Gastrocnemius medialis (tissue), 4 donors: ENCODE measurements at regions of chr15 and their contacts with region 1.

Region 1: GRCh38 chr15:42548253-42549031 is at the starts of genes HAUS2 and LRRC57:
- DNase-seq: peak; percentile 70 to 74
- ATAC-seq: peak; percentile 87 to 92
- H3K4me3 ChIP-seq: peak within 1 kb of the TSS; percentile 79 to 100 (median 88)
- H3K27ac ChIP-seq: peak within 1 kb of the TSS; percentile 84 to 95 (median 90)
- H3K4me1 ChIP-seq: peaks cover 27 to 30% of the 10 kb centered on the region in 2 donors
- H3K27me3 ChIP-seq: no peaks in the 10 kb centered on the region
- CTCF ChIP-seq: peak in 1 of 5 experiments; percentile 27
- POLR2A ChIP-seq: peak; percentile 80 to 82
- total RNA-seq, gene HAUS2: 24.7 to 31.9 (median 27.8) TPM
- total RNA-seq, gene LRRC57: 6.0 to 15.4 (median 10.0) TPM

Region 2: DNA sequence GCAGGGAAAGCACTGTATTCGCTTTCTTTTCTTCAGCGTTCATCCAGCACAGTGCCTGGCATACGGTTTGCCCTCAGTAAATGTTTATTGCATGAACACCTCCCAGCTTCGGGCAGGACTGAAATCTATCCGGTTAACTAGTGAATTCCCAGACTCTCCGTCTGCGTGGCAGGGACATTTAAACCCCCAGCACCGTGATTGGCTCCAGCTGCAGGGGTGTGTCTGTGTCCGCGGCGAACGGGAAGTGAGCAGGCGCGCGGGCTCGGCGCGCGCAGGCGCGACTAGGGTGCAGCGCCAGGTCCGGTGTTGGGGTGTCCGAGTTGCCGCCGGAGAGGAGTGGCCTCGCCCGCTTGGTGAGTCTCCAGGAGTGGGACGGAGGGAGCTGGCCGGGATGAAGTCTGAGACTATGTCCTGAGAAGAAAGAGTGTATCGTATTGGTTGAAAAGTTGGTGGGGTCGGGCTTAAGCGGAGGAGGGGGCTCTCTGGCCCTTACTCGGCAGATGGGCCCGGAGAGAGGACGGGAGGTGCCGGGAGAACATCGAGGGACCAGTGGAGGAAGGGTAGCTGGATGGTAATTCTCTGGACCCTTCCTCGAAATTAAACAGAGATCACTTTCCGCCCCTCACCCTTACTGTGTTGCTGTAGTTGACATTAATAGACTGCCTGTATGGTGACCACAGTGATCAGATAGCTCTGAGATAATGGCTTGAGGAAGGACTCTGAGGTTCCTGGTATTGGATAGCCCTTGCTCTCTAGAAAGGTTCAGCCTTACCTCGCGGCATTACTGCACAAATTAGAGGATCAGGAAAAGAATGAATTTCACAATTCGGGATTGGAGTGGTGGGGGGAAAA is 52.9 kb before region 1 on chr15 and contains the start of gene SNAP23:
- in situ Hi-C with region 1: no loop called
- intact Hi-C with region 1: loop called (anchors 5 kb)
- DNase-seq: peak; percentile 94 to 96
- ATAC-seq: peak; percentile 85 to 90
- H3K4me3 ChIP-seq: peak within 1 kb of the TSS; percentile 73 to 92 (median 84)
- H3K27ac ChIP-seq: peak within 1 kb of the TSS; percentile 88 to 97 (median 96)
- H3K4me1 ChIP-seq: peaks cover 41 to 52% of the 10 kb centered on the region in 2 donors
- H3K27me3 ChIP-seq: no peaks in the 10 kb centered on the region
- CTCF ChIP-seq: no peak
- POLR2A ChIP-seq: peak; percentile 95 to 99
- total RNA-seq, gene SNAP23: 26.7 to 74.3 (median 40.2) TPM

Region 3: DNA sequence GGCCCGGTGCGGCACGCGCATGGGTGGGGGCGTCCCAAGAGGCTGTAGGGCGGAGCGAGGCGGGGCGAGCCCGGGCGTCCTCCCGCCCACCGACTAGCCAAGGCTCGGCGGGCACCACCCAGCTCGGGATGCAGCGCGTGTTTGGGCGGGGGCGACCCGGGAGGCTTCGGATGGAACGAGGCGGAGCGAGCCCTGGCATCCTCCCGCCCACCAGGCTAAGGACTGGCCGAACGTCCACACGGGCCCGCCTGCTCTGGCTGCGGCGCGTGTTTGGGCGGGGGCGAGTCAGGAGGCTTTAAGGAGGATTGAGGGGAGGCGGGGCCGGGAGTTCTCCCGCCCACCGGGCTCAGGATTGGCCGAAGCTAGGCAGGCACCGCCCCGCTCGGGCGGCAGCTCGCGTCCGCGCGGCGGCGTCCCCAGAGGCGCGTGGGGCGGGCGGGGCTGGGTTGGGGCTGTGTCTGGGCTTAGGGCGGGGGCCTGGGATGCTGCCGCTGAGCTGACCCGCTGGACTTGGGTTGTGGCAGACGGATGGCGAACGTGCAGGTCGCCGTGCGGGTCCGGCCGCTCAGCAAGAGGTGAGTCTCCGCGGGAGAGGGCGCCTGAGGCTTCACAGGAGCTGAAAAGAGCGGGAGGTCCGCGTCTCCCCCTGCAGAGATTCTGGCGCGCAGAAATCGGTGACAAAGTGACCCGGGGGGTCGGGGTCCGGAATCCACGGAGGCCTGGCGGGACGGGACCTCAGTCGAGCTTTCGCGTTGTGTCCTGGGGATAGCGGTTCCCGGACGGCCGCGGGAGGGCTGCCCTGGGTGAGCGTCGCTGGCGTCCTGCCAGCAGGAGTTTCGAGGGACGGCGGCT is 27.0 kb after region 1 on chr15 and contains the start of gene STARD9:
- in situ Hi-C with region 1: no loop called
- intact Hi-C with region 1: loop called (anchors 1 kb)
- DNase-seq: peak; percentile 96 to 98
- ATAC-seq: peak; percentile 95 to 96
- H3K4me3 ChIP-seq: peak within 1 kb of the TSS; percentile 85 to 97 (median 91)
- H3K27ac ChIP-seq: peak within 1 kb of the TSS; percentile 85 to 93 (median 87)
- H3K4me1 ChIP-seq: peaks cover 14 to 15% of the 10 kb centered on the region in 2 donors
- H3K27me3 ChIP-seq: peaks cover 0 to 5% (median 0%) of the 10 kb centered on the region in 3 donors
- CTCF ChIP-seq: peak in 1 of 5 experiments; percentile 10
- POLR2A ChIP-seq: peak; percentile 56 to 87
- total RNA-seq, gene STARD9: 1.6 to 3.5 (median 2.0) TPM

Region 4: DNA sequence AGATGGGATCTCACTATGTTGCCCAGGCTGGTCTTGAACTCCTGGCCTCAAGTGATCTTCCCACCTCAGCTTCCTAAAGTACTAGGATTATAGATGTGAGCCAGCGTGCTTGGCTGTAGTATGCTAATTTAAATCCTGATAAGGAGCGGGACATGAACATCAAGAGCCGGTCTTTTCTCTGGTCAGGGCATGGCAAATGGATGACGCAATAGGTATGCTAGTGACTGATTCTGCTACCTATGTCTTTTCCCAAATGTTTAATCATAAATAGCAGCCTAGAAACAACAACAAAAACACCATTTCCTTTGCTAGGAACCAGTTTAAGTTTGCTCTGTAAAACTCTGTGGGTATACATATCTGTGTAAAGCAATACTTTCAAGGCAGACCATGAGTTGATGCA is 91.7 kb after region 1 on chr15:
- in situ Hi-C with region 1: loop called in 1 of 4 experiments (anchors 10 kb)
- intact Hi-C with region 1: no loop called
- DNase-seq: no peak
- ATAC-seq: no peak
- H3K4me3 ChIP-seq: no peak overlapping the region
- H3K27ac ChIP-seq: no peak overlapping the region
- H3K4me1 ChIP-seq: no peaks in the 10 kb centered on the region
- H3K27me3 ChIP-seq: no peaks in the 10 kb centered on the region
- CTCF ChIP-seq: no peak
- POLR2A ChIP-seq: no peak

Region 5: GRCh38 chr15:42736793-42737528 is 188.5 kb after region 1 on chr15 and contains the start of gene CDAN1:
- in situ Hi-C with region 1: no loop called
- intact Hi-C with region 1: no loop called
- DNase-seq: peak; percentile 83 to 89
- ATAC-seq: peak; percentile 94
- H3K4me3 ChIP-seq: peak within 1 kb of the TSS; percentile 61 to 90 (median 72)
- H3K27ac ChIP-seq: peak within 1 kb of the TSS; percentile 85 to 96 (median 93)
- H3K4me1 ChIP-seq: peaks cover 13 to 16% of the 10 kb centered on the region in 2 donors
- H3K27me3 ChIP-seq: no peaks in the 10 kb centered on the region
- CTCF ChIP-seq: peak in 1 of 5 experiments; percentile 20
- POLR2A ChIP-seq: peak; percentile 74 to 75
- total RNA-seq, gene CDAN1: 4.2 to 5.9 (median 5.1) TPM

Region 6: GRCh38 chr15:42891569-42891968 is 343.1 kb after region 1 on chr15:
- in situ Hi-C with region 1: no loop called
- intact Hi-C with region 1: no loop called
- DNase-seq: no peak
- ATAC-seq: no peak
- H3K4me3 ChIP-seq: no peak overlapping the region
- H3K27ac ChIP-seq: no peak overlapping the region
- H3K4me1 ChIP-seq: peaks cover 7 to 9% of the 10 kb centered on the region in 2 donors
- H3K27me3 ChIP-seq: no peaks in the 10 kb centered on the region
- CTCF ChIP-seq: no peak
- POLR2A ChIP-seq: no peak